Activated CD4-positive, alpha-beta T cell treated with anti-CD3 and anti-CD28 coated beads, Interleukin-2, amount 10 ng/mL, durations not matched to agents 24 days and 14 days (primary cell): ENCODE measurements at regions of chr16 and their contacts with region 1.

Region 1: DNA sequence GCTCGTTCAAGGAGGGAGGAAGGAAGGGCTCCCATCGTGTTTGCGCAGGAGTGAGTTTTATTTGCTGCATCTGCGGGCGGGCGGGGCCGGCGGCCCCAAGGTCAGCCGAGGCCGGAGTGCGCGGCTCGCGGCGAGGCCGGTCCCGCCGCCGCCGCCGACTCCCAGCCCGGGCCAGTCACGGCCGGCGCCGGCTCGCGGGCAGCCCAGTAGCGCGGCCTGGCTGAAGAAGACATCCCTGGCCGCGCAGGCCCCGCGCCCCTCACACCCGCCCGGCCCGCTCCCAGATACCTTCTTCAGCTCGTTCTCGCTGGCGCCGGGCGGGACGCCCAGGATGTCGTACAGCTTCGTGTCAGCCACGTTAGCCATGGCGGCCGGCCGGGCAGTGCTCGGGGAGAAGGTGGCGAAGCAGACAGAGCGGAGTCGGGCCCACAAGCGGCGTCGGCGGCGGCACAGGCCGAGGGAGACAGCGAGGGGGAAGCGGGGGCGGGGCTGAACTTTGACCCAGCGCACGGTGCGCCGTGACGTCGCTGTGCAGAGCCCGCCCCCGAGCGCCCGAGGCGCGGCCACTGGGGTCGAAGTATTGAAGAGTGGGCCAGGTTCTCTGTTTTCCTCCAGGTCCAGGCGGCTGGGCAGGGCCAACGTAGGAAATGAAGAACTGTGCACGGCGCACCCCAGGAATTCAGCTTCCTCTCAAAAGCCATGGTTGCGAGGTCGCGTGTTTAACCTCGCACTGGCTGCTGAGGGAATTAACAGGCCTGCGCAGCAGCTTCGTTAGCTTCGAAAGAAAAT is at the start of gene DNAJA2:
- DNase-seq: peak; percentile 97
- H3K4me3 Mint-ChIP-seq: peak within 1 kb of the TSS; percentile 98
- H3K27ac Mint-ChIP-seq: peak within 1 kb of the TSS; percentile 98
- H3K4me1 Mint-ChIP-seq: peaks cover 48% of the 10 kb centered on the region
- H3K27me3 Mint-ChIP-seq: no peaks in the 10 kb centered on the region
- total RNA-seq, gene DNAJA2: 81.7 and 84.2 TPM in 2 replicates

Region 2: GRCh38 chr16:46822270-46822669 is 151.1 kb before region 1 on chr16:
- intact Hi-C with region 1: loop called (anchors 2 kb)
- DNase-seq: peak; percentile 65
- H3K4me3 Mint-ChIP-seq: no peak overlapping the region
- H3K27ac Mint-ChIP-seq: no peak overlapping the region
- H3K4me1 Mint-ChIP-seq: peaks cover 26% of the 10 kb centered on the region
- H3K27me3 Mint-ChIP-seq: no peaks in the 10 kb centered on the region

Region 3: GRCh38 chr16:47018223-47018891 is 45.0 kb after region 1 on chr16:
- intact Hi-C with region 1: loop called (anchors 1 kb)
- DNase-seq: peak; percentile 74
- H3K4me3 Mint-ChIP-seq: no peak overlapping the region
- H3K27ac Mint-ChIP-seq: peak overlapping the region; percentile 25
- H3K4me1 Mint-ChIP-seq: peaks cover 19% of the 10 kb centered on the region
- H3K27me3 Mint-ChIP-seq: peaks cover 2% of the 10 kb centered on the region

Region 4: DNA sequence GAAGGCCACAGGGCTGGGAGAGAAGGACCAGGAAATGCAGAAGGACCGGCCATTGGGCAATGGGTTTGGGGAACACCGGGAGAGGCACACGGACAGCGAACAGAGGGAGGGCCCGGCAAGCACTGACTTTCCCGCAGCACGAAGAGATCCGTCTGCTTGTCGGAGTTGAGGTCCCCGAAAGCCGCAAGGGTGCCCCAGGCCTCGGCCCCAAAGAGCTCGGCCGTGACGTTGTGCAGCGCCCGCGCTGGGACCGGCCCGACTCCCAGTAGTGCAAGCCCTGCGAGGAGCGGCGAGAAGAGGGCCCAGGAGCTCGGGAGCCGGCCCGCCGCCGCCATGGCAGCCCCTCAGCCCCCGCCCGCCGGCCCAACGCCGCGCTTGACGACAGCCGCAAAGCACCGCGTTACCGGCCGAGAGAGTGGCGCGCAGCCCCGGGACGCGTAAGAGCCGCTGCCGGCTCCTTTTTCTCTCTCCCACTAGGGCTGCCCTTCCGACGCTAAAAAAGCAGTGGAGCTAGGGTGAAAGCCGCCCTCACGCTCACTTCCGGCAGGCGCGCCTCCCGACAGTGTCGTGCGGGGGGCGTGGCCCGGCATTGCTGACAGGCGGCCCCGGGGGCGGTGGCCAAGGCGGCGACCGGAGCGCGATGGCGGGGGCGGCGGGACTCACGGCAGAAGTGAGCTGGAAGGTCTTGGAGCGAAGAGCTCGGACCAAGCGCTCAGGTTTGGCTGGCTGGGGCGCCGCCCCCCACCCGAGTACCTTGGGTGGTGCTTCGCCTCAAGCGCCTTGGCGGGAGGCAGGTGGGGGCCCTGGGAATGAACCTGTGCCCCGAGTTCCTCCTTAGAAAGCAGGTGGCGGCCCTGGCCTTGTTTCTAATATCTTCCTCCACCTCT is 487.6 kb after region 1 on chr16 and contains the starts of genes ITFG1 and PHKB:
- intact Hi-C with region 1: loop called (anchors 2 kb)
- DNase-seq: peak; percentile 99
- H3K4me3 Mint-ChIP-seq: peak within 1 kb of the TSS; percentile 94
- H3K27ac Mint-ChIP-seq: peak within 1 kb of the TSS; percentile 97
- H3K4me1 Mint-ChIP-seq: peaks cover 36% of the 10 kb centered on the region
- H3K27me3 Mint-ChIP-seq: no peaks in the 10 kb centered on the region
- total RNA-seq, gene ITFG1: 26.1 and 28.5 TPM in 2 replicates
- total RNA-seq, gene PHKB: 23.7 and 27.9 TPM in 2 replicates

Region 5: GRCh38 chr16:48365581-48366164 is 1392.3 kb after region 1 on chr16:
- intact Hi-C with region 1: loop called (anchors 10 kb)
- DNase-seq: peak; percentile 95
- H3K4me3 Mint-ChIP-seq: peak overlapping the region; percentile 89
- H3K27ac Mint-ChIP-seq: peak overlapping the region; percentile 91
- H3K4me1 Mint-ChIP-seq: peaks cover 46% of the 10 kb centered on the region
- H3K27me3 Mint-ChIP-seq: no peaks in the 10 kb centered on the region